Caco-2 (cell line): ENCODE measurements at regions of chr1 and their contacts with region 1.

Region 1: GRCh38 chr1:147242439-147243227 is at the start of gene CHD1L:
- DNase-seq: peak; percentile 94 to 96
- H3K4me3 ChIP-seq: peak within 1 kb of the TSS; percentile 94
- H3K4me3 Mint-ChIP-seq: peak within 1 kb of the TSS; percentile 67
- H3K27ac Mint-ChIP-seq: peak within 1 kb of the TSS; percentile 84
- H3K4me1 ChIP-seq: peaks cover 40% of the 10 kb centered on the region
- H3K4me1 Mint-ChIP-seq: peaks cover 49% of the 10 kb centered on the region
- H3K27me3 ChIP-seq: no peaks in the 10 kb centered on the region
- H3K27me3 Mint-ChIP-seq: no peaks in the 10 kb centered on the region
- CTCF ChIP-seq: peak; percentile 93 to 98
- total RNA-seq, gene CHD1L: 55.4 and 56.2 TPM in 2 replicates

Region 2: GRCh38 chr1:147084273-147085096 is 158.1 kb before region 1 on chr1:
- CTCF ChIA-PET with region 1: interaction called, 5 read pairs
- POLR2A ChIA-PET with region 1: interaction called, 21 read pairs
- intact Hi-C with region 1: no loop called
- DNase-seq: peak; percentile 89 to 92
- H3K4me3 ChIP-seq: peak overlapping the region; percentile 41
- H3K4me3 Mint-ChIP-seq: peak overlapping the region; percentile 79
- H3K27ac Mint-ChIP-seq: peak overlapping the region; percentile 99
- H3K4me1 ChIP-seq: no peaks in the 10 kb centered on the region
- H3K4me1 Mint-ChIP-seq: no peaks in the 10 kb centered on the region
- H3K27me3 ChIP-seq: no peaks in the 10 kb centered on the region
- H3K27me3 Mint-ChIP-seq: no peaks in the 10 kb centered on the region
- CTCF ChIP-seq: no peak

Region 3: DNA sequence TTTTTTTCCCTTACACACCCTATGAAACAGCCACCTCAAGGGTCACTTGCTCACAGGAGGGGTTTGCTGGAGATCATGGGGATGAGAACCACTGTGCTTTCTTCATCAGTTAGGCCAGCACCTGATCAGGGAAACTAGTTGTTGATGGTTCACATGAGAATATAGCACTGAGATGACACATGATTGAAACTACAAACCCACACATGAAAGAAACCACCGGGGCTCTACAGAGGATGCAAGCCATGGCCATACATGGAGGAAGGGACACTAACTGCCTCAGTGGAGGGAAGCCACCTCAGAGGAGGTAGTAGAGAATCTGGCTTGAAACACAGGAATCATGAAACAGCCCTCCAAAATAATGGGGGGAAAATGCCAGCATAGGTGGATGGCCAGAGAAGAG is 133.6 kb before region 1 on chr1:
- CTCF ChIA-PET with region 1: no interaction called
- POLR2A ChIA-PET with region 1: no interaction called
- intact Hi-C with region 1: loop called (anchors 1 kb)
- DNase-seq: no peak
- H3K4me3 ChIP-seq: no peak overlapping the region
- H3K4me3 Mint-ChIP-seq: no peak overlapping the region
- H3K27ac Mint-ChIP-seq: no peak overlapping the region
- H3K4me1 ChIP-seq: peaks cover 50% of the 10 kb centered on the region
- H3K4me1 Mint-ChIP-seq: peaks cover 36% of the 10 kb centered on the region
- H3K27me3 ChIP-seq: no peaks in the 10 kb centered on the region
- H3K27me3 Mint-ChIP-seq: no peaks in the 10 kb centered on the region
- CTCF ChIP-seq: no peak

Region 4: DNA sequence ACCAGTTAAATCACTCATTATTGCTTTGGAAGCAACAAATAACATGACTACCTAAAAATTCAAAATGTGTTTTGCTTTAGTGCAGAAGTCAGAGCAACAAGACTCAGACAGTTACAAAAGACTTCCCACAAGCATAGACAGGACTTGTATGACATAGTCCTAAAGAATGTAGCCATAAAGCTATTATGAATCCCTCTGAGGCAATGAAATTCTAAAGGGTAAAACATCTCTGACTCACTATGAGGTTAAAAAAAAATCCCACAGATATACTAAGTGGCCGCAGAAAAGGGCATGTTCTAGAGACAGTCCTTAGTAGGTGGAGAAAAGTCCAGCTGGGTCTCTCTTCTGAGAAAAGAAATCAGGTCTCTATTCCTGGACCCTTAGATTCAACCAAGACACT is 75.3 kb before region 1 on chr1:
- CTCF ChIA-PET with region 1: interaction called, 29 read pairs
- POLR2A ChIA-PET with region 1: no interaction called
- intact Hi-C with region 1: loop called (anchors 1 kb)
- DNase-seq: peak in 1 of 2 experiments; percentile 12
- H3K4me3 ChIP-seq: no peak overlapping the region
- H3K4me3 Mint-ChIP-seq: no peak overlapping the region
- H3K27ac Mint-ChIP-seq: peak overlapping the region; percentile 26
- H3K4me1 ChIP-seq: peaks cover 46% of the 10 kb centered on the region
- H3K4me1 Mint-ChIP-seq: peaks cover 39% of the 10 kb centered on the region
- H3K27me3 ChIP-seq: no peaks in the 10 kb centered on the region
- H3K27me3 Mint-ChIP-seq: no peaks in the 10 kb centered on the region
- CTCF ChIP-seq: no peak

Region 5: DNA sequence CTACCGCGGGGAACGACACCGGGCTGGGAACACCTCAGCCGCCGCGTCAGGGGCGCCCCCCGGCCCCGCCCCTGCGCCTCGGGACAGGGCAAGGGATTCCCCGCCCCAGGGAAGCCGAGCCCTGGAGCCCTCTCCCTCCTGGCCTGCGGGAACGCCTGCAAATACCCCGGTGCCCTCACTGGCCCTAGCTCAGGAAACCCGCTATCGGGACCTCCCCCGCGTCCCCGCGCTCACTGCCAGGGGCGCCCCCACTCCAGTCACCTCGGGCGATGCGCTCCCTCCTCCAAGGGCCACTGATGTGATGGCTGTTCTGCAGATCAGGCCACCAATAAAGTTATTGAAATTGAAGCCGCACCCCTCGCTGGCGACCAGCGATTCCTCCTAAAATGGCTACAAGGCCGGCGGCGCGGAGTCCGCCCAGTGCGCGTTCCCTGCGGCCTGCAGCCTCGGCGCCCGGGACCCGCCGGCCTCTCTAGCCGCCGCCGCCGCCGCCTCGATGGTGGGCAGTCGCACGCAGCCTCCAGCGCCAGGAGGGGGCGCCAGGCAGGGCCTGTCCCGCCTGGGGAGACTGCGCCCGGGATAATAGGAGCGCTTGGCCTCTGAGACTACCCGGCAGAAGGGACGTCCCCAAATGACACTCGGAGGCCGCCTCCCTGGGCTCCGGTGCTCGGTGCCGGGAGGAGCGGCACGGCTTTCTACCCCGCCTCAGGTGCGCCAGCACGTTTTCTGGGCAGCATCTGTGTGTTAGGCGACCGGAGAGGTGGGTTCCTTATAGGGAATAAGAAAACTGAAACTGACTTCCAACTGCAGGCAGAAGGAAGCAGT is 70.3 kb before region 1 on chr1 and contains the start of gene PRKAB2:
- CTCF ChIA-PET with region 1: interaction called, 29 read pairs
- POLR2A ChIA-PET with region 1: interaction called, 10 read pairs
- intact Hi-C with region 1: loop called (anchors 1 kb)
- DNase-seq: peak; percentile 96 to 98
- H3K4me3 ChIP-seq: peak within 1 kb of the TSS; percentile 98
- H3K4me3 Mint-ChIP-seq: peak within 1 kb of the TSS; percentile 96
- H3K27ac Mint-ChIP-seq: peak within 1 kb of the TSS; percentile 98
- H3K4me1 ChIP-seq: peaks cover 36% of the 10 kb centered on the region
- H3K4me1 Mint-ChIP-seq: peaks cover 34% of the 10 kb centered on the region
- H3K27me3 ChIP-seq: no peaks in the 10 kb centered on the region
- H3K27me3 Mint-ChIP-seq: no peaks in the 10 kb centered on the region
- CTCF ChIP-seq: peak; percentile 87 to 88
- total RNA-seq, gene PRKAB2: 30.1 and 31.5 TPM in 2 replicates

Region 6: GRCh38 chr1:147185441-147185840 is 57.2 kb before region 1 on chr1:
- CTCF ChIA-PET with region 1: interaction called, 3 read pairs
- POLR2A ChIA-PET with region 1: no interaction called
- intact Hi-C with region 1: loop called (anchors 2 kb)
- DNase-seq: peak in 1 of 2 experiments; percentile 46
- H3K4me3 ChIP-seq: no peak overlapping the region
- H3K4me3 Mint-ChIP-seq: no peak overlapping the region
- H3K27ac Mint-ChIP-seq: no peak overlapping the region
- H3K4me1 ChIP-seq: peaks cover 22% of the 10 kb centered on the region; the same call in 1 of the 2 replicates
- H3K4me1 Mint-ChIP-seq: peaks cover 16% of the 10 kb centered on the region
- H3K27me3 ChIP-seq: no peaks in the 10 kb centered on the region
- H3K27me3 Mint-ChIP-seq: no peaks in the 10 kb centered on the region
- CTCF ChIP-seq: no peak

Region 7: GRCh38 chr1:147210987-147211386 is 31.6 kb before region 1 on chr1:
- CTCF ChIA-PET with region 1: interaction called, 4 read pairs
- POLR2A ChIA-PET with region 1: no interaction called
- intact Hi-C with region 1: loop called (anchors 2 kb)
- DNase-seq: peak in 1 of 2 experiments; percentile 21
- H3K4me3 ChIP-seq: no peak overlapping the region
- H3K4me3 Mint-ChIP-seq: no peak overlapping the region
- H3K27ac Mint-ChIP-seq: no peak overlapping the region
- H3K4me1 ChIP-seq: peaks cover 51% of the 10 kb centered on the region
- H3K4me1 Mint-ChIP-seq: peaks cover 39% of the 10 kb centered on the region
- H3K27me3 ChIP-seq: no peaks in the 10 kb centered on the region
- H3K27me3 Mint-ChIP-seq: no peaks in the 10 kb centered on the region
- CTCF ChIP-seq: no peak